ENCODE measurements at regions of chr1 and their contacts with region 1.

Region 1: GRCh38 chr1:226186124-226187018 is at the start of gene ACBD3:
- DNase-seq: peak; percentile 74 to 91 (median 82)
- H3K4me3 ChIP-seq: peak within 1 kb of the TSS; percentile 97
- H3K4me3 Mint-ChIP-seq: peak within 1 kb of the TSS; percentile 91 to 98 (median 95)
- H3K27ac ChIP-seq: peak within 1 kb of the TSS; percentile 90
- H3K27ac Mint-ChIP-seq: peak within 1 kb of the TSS; percentile 89 to 98 (median 95)
- H3K4me1 ChIP-seq: peaks cover 19% of the 10 kb centered on the region
- H3K4me1 Mint-ChIP-seq: peaks cover 37 to 49% (median 42%) of the 10 kb centered on the region in 3 donors
- H3K27me3 ChIP-seq: no peaks in the 10 kb centered on the region
- H3K27me3 Mint-ChIP-seq: no peaks in the 10 kb centered on the region
- total RNA-seq, gene ACBD3: 20.4 to 21.5 TPM

Region 2: GRCh38 chr1:226157761-226158316 is 28.5 kb before region 1 on chr1:
- CTCF ChIA-PET with region 1: no interaction called
- POLR2A ChIA-PET with region 1: no interaction called
- DNase-seq: no peak
- H3K4me3 ChIP-seq: no peak overlapping the region
- H3K4me3 Mint-ChIP-seq: no peak overlapping the region
- H3K27ac ChIP-seq: no peak overlapping the region
- H3K27ac Mint-ChIP-seq: peak overlapping the region in 4 of 8 donors; percentile 17 to 63 (median 30)
- H3K4me1 ChIP-seq: no peaks in the 10 kb centered on the region
- H3K4me1 Mint-ChIP-seq: peaks cover 8 to 20% (median 17%) of the 10 kb centered on the region in 3 donors
- H3K27me3 ChIP-seq: no peaks in the 10 kb centered on the region
- H3K27me3 Mint-ChIP-seq: no peaks in the 10 kb centered on the region

Region 3: DNA sequence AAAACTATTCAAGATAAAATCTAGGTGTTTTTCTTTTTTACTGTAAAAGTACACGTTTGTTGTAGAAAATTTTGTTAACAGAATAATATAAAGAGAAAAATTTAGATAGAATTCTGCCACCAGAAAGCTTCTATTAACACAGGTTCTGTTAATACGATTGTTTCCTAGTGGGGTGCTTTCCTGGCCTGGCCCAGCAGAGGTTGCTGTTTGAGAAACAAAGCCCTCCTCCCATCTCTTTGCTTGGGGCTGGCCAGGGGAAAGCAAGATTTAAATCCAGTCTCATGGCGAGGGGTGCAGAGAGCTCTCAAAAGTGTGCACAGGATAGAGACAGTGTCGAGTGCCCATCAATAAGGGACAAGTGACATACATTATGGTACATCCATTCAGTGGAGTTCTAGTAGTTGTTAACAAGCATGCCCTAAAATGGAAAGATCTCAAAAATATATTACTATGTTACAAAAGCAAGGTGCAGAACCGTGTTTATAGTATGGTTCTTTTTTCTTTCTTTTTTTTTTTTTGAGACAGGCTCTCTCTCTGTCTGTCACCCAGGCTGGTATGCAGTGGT is 14.7 kb after region 1 on chr1:
- CTCF ChIA-PET with region 1: interaction called, 10 read pairs
- POLR2A ChIA-PET with region 1: no interaction called
- DNase-seq: no peak
- H3K4me3 ChIP-seq: no peak overlapping the region
- H3K4me3 Mint-ChIP-seq: no peak overlapping the region
- H3K27ac ChIP-seq: no peak overlapping the region
- H3K27ac Mint-ChIP-seq: no peak overlapping the region
- H3K4me1 ChIP-seq: no peaks in the 10 kb centered on the region
- H3K4me1 Mint-ChIP-seq: peaks cover 0 to 3% (median 0%) of the 10 kb centered on the region in 3 donors
- H3K27me3 ChIP-seq: no peaks in the 10 kb centered on the region
- H3K27me3 Mint-ChIP-seq: peaks cover 3 to 16% of the 10 kb centered on the region in 2 donors

Measured in CD8-positive, alpha-beta memory T cell (primary cell).